ENCODE measurements at regions of chr22 and their contacts with region 1.

Region 1: DNA sequence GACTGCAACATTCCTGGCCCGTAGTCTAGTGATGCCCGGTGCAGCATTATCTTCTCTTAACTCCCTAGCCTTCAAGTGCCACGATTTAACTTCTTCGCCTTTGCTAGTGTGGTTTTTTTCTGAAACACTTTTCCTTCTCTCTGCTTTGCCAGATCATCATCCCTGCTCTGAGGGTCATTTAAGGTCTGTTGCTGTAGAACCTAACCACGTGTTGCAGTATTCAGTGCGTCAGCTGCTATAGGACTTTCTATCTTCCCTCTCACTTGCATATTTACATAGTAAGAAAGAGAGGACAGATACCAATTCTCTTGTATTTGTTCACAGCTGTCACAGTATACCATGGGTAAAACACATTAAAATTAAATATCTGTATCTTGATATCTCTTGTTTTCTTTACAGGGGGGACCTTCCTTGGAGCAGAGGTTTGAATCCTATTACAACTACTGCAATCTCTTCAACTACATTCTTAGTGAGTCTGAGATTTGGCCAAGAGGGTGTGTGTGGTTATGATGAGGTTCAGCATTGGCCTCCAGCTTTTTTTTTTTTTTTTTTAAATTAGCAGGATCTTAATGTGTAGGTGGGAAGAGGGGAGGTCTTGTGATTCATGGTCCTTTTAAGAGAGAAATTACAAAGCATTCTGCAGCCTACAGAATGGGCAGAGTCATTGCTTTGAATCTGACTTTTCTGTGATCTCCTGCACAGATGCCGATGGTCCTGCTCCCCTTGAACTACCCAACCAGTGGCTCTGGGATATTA is 13.5 kb downstream of the EIF3L start:
- DNase-seq: no peak
- ATAC-seq: no peak
- H3K4me3 Mint-ChIP-seq: no peak overlapping the region
- H3K27ac Mint-ChIP-seq: peak overlapping the region; percentile 39
- H3K4me1 Mint-ChIP-seq: peaks cover 9% of the 10 kb centered on the region
- H3K27me3 Mint-ChIP-seq: no peaks in the 10 kb centered on the region
- CTCF ChIP-seq: no peak

Region 2: GRCh38 chr22:37807410-37808293 is 55.1 kb before region 1 on chr22 and contains the start of gene GCAT:
- CTCF ChIA-PET with region 1: interaction called, 11 read pairs
- POLR2A ChIA-PET with region 1: interaction called, 3 read pairs
- intact Hi-C with region 1: no loop called
- DNase-seq: peak; percentile 96
- ATAC-seq: peak; percentile 98
- H3K4me3 Mint-ChIP-seq: peak within 1 kb of the TSS; percentile 77
- H3K27ac Mint-ChIP-seq: no peak within 1 kb of the TSS
- H3K4me1 Mint-ChIP-seq: peaks cover 33% of the 10 kb centered on the region
- H3K27me3 Mint-ChIP-seq: peaks cover 54% of the 10 kb centered on the region
- CTCF ChIP-seq: no peak
- total RNA-seq, gene GCAT: 19.0 to 20.4 TPM

Region 3: DNA sequence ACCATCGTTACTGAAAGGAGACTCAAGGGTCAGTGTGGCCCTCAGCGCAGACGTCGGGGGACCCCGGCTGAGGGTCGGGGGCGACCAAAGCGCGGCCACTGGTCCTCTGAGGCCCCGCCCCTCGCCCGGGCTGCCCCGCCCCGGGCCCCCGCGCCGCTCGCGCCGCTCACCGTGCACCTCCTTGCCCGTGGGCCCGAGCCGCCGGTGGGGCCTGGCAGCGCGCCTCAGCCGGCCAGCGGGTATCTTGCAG is 19.1 kb before region 1 on chr22:
- CTCF ChIA-PET with region 1: interaction called, 10 read pairs
- POLR2A ChIA-PET with region 1: interaction called, 8 read pairs
- intact Hi-C with region 1: no loop called
- DNase-seq: peak; percentile 62
- ATAC-seq: peak; percentile 38
- H3K4me3 Mint-ChIP-seq: peak overlapping the region; percentile 89
- H3K27ac Mint-ChIP-seq: peak overlapping the region; percentile 87
- H3K4me1 Mint-ChIP-seq: peaks cover 21% of the 10 kb centered on the region
- H3K27me3 Mint-ChIP-seq: no peaks in the 10 kb centered on the region
- CTCF ChIP-seq: no peak

Region 4: DNA sequence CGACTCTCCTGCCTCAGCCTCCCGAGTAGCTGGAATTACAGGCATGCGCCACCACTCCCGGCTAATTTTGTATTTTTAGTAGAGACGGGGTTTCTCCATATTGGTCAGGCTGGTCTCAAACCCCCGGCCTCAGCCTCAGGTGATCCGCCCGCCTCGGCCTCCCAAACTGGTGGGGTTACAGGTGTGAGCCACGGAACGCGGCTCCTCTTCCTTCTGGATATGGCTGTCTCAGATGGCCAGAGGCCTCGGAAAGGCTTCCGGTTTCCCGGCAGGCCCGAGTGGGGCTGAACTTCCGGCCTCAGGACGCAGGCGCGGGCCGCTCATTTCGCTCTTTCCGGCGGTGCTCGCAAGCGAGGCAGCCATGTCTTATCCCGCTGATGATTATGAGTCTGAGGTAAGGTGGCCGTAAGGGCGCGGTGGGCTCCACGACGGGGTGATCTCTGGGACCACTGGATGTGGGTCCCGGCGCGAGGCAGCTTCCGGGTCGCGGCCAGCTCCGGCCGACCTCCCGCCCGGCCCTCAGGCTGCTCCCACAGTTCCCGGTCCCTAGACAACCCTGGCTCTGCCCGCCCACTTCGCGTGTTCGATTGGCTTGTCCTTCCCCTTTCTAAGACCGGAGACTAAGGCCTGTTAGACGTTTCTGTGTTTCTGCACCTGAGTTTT is 13.5 kb before region 1 on chr22 and contains the start of gene EIF3L:
- CTCF ChIA-PET with region 1: interaction called, 24 read pairs
- POLR2A ChIA-PET with region 1: interaction called, 8 read pairs
- intact Hi-C with region 1: no loop called
- DNase-seq: peak; percentile 92
- ATAC-seq: peak; percentile 70
- H3K4me3 Mint-ChIP-seq: peak within 1 kb of the TSS; percentile 86
- H3K27ac Mint-ChIP-seq: peak within 1 kb of the TSS; percentile 98
- H3K4me1 Mint-ChIP-seq: peaks cover 41% of the 10 kb centered on the region
- H3K27me3 Mint-ChIP-seq: no peaks in the 10 kb centered on the region
- CTCF ChIP-seq: no peak
- total RNA-seq, gene EIF3L: 687 to 694 TPM

Region 5: DNA sequence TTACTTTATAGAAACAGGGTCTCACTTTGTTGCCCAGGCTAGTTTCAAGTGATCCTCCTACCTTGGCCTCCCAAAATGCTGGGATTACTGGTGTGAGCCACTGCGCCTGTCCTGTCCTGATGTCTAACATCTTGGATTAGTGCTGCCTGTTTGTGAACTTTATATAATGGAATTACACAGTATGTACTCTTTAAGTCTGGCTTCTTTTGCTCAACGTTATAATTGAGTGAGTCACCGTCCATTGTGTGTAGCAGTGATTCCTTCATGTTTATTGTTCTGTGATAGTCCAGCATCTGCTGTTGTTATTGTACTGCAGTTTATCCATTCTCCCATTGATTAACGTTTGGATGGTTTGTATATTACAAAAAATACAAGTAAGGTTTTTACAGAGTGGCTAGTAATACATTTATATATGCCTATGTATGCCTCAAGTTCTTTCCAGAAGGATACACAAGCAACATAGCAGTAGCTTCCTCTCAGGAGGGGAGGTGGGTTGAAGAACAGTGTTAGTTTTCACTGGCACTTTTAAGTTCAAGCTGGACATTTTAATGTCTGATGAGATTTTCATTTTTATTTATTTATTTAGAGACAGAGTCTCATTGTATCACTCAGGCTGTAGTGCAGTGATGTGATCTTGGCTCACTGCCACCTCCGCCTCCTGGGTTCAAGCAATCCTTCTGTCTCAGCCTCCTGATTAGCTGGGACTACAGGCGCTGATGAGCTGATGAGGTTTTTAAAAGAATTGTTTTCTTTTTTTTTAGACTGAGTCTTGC is 18.1 kb after region 1 on chr22:
- CTCF ChIA-PET with region 1: interaction called, 19 read pairs
- POLR2A ChIA-PET with region 1: no interaction called
- intact Hi-C with region 1: no loop called
- DNase-seq: no peak
- ATAC-seq: no peak
- H3K4me3 Mint-ChIP-seq: no peak overlapping the region
- H3K27ac Mint-ChIP-seq: no peak overlapping the region
- H3K4me1 Mint-ChIP-seq: peaks cover 4% of the 10 kb centered on the region
- H3K27me3 Mint-ChIP-seq: no peaks in the 10 kb centered on the region
- CTCF ChIP-seq: no peak

Region 6: DNA sequence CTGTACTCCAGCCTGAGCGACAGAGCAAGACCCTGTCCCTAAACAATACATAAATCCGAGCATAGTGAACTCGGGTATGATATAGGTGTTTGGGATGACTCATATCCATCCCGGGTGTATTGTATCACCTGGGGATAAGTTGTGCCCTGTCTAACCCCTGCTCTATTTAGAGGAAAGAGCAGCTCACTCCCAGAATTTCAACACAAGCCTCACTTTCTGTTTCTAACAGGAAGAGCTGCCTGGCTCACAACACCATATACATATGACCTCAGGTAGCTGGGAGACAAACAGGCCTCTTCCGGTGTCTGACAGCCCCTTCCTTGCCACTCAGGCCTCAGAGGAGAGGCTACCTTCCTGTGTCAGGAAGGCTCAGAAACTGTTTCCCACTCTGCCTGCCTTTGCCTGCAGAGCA is 33.4 kb after region 1 on chr22:
- CTCF ChIA-PET with region 1: interaction called, 10 read pairs
- POLR2A ChIA-PET with region 1: no interaction called
- intact Hi-C with region 1: no loop called
- DNase-seq: peak; percentile 70
- ATAC-seq: peak; percentile 97
- H3K4me3 Mint-ChIP-seq: peak overlapping the region; percentile 27
- H3K27ac Mint-ChIP-seq: peak overlapping the region; percentile 91
- H3K4me1 Mint-ChIP-seq: peaks cover 16% of the 10 kb centered on the region
- H3K27me3 Mint-ChIP-seq: no peaks in the 10 kb centered on the region
- CTCF ChIP-seq: no peak